ENCODE measurements at regions of chr10 and their contacts with region 1.

Region 1: GRCh38 chr10:6088721-6089390 is at the start of gene RBM17:
- DNase-seq: peak; percentile 96 to 99 (median 97)
- ATAC-seq: peak; percentile 88
- H3K4me3 ChIP-seq: peak within 1 kb of the TSS; percentile 82 to 83
- H3K4me3 Mint-ChIP-seq: peak within 1 kb of the TSS; percentile 96
- H3K27ac ChIP-seq: peak within 1 kb of the TSS; percentile 24 to 54
- H3K27ac Mint-ChIP-seq: peak within 1 kb of the TSS; percentile 86
- H3K4me1 ChIP-seq: peaks cover 47% of the 10 kb centered on the region
- H3K4me1 Mint-ChIP-seq: peaks cover 52% of the 10 kb centered on the region
- H3K27me3 ChIP-seq: no peaks in the 10 kb centered on the region
- H3K27me3 Mint-ChIP-seq: peaks cover 1% of the 10 kb centered on the region
- CTCF ChIP-seq: peak; percentile 100
- total RNA-seq, gene RBM17: 151 to 160 TPM

Region 2: GRCh38 chr10:5813287-5814109 is 275.4 kb before region 1 on chr10 and contains the start of gene GDI2:
- CTCF ChIA-PET with region 1: interaction called, 3 read pairs
- POLR2A ChIA-PET with region 1: no interaction called
- intact Hi-C with region 1: loop called (anchors 2 to 5 kb)
- DNase-seq: peak; percentile 91 to 98 (median 96)
- ATAC-seq: peak; percentile 93
- H3K4me3 ChIP-seq: peak within 1 kb of the TSS; percentile 68 to 83
- H3K4me3 Mint-ChIP-seq: peak within 1 kb of the TSS; percentile 86
- H3K27ac ChIP-seq: peak within 1 kb of the TSS; percentile 87 to 93
- H3K27ac Mint-ChIP-seq: peak within 1 kb of the TSS; percentile 87
- H3K4me1 ChIP-seq: peaks cover 48% of the 10 kb centered on the region
- H3K4me1 Mint-ChIP-seq: peaks cover 56% of the 10 kb centered on the region
- H3K27me3 ChIP-seq: no peaks in the 10 kb centered on the region
- H3K27me3 Mint-ChIP-seq: no peaks in the 10 kb centered on the region
- CTCF ChIP-seq: no peak
- total RNA-seq, gene GDI2: 62.1 to 70.5 TPM

Region 3: DNA sequence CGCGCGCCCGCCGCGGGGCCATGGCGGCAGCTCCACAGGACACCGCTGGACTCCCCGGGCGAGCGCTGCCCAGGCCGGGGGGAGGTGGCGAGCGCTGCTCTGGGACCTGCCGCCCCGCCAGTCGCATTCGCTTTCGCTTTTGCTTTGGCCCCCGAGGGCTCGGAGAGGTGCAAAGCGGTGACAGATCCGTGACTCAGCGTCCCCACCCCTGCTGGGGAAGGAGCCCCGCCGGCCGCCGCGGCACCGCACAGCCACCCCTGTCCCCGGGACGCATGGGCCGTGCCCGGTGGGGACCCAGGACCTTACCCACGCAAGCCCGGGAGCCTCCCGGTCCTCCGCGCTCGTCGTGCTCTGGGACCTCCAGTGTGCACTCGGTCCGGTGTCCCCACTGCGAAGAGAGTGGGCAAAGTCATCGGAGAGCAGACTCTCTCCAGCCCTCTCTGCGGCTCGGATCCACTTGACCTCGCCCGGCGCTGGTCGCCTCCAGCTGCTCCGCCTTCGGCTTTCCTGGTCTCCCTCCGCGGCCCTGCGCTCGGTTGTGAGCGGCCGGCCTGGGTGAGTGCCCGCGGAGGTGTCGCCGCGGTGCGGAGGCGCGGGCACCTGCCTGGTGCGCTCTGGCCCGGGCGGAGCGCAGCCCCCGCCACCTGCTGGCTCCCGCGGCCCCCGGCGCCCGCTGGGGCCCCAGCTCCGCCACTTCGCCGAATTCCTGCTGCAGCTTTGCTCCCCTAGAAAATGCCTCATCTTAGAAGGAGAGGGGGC is 111.2 kb before region 1 on chr10 and contains the start of gene IL15RA:
- CTCF ChIA-PET with region 1: interaction called, 3 read pairs
- POLR2A ChIA-PET with region 1: interaction called, 4 read pairs
- intact Hi-C with region 1: loop called in 1 of 2 experiments (anchors 1 kb)
- DNase-seq: peak; percentile 54 to 91 (median 84)
- ATAC-seq: peak; percentile 78
- H3K4me3 ChIP-seq: peak within 1 kb of the TSS; percentile 92 to 95
- H3K4me3 Mint-ChIP-seq: peak within 1 kb of the TSS; percentile 97
- H3K27ac ChIP-seq: peak within 1 kb of the TSS; percentile 77 to 82
- H3K27ac Mint-ChIP-seq: peak within 1 kb of the TSS; percentile 96
- H3K4me1 ChIP-seq: peaks cover 12% of the 10 kb centered on the region
- H3K4me1 Mint-ChIP-seq: peaks cover 24% of the 10 kb centered on the region
- H3K27me3 ChIP-seq: no peaks in the 10 kb centered on the region
- H3K27me3 Mint-ChIP-seq: no peaks in the 10 kb centered on the region
- CTCF ChIP-seq: no peak
- total RNA-seq, gene IL15RA: 4.8 to 5.4 TPM

Region 4: DNA sequence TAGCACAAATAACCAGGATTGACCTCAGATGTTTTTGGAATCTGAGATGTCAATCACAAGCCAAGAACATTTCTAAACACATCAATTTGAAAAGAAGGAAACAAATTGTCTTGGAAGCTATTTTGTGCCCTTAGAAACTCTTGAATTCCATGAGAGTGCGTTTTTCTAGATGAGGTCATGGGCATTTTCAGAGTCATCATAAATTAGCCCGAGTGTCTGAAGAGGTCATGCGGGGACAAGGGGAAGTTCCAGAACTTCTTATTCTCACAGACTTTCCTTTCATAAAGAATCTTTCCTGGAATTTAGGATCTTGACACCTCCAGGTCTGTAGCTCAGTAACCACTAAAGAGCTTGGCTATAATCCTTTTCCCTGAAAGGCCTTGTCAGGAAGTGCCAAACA is 54.9 kb before region 1 on chr10:
- CTCF ChIA-PET with region 1: interaction called, 11 read pairs
- POLR2A ChIA-PET with region 1: interaction called, 4 read pairs
- intact Hi-C with region 1: no loop called
- DNase-seq: no peak
- ATAC-seq: no peak
- H3K4me3 ChIP-seq: no peak overlapping the region
- H3K4me3 Mint-ChIP-seq: no peak overlapping the region
- H3K27ac ChIP-seq: no peak overlapping the region
- H3K27ac Mint-ChIP-seq: no peak overlapping the region
- H3K4me1 ChIP-seq: peaks cover 26% of the 10 kb centered on the region
- H3K4me1 Mint-ChIP-seq: peaks cover 27% of the 10 kb centered on the region
- H3K27me3 ChIP-seq: no peaks in the 10 kb centered on the region
- H3K27me3 Mint-ChIP-seq: no peaks in the 10 kb centered on the region
- CTCF ChIP-seq: no peak

Region 5: GRCh38 chr10:6050801-6051445 is 37.9 kb before region 1 on chr10:
- CTCF ChIA-PET with region 1: interaction called, 46 read pairs
- POLR2A ChIA-PET with region 1: interaction called, 15 read pairs
- intact Hi-C with region 1: loop called (anchors 1 to 2 kb)
- DNase-seq: peak; percentile 68 to 99 (median 86)
- ATAC-seq: peak; percentile 79
- H3K4me3 ChIP-seq: peak overlapping the region; percentile 57 to 69
- H3K4me3 Mint-ChIP-seq: peak overlapping the region; percentile 88
- H3K27ac ChIP-seq: peak overlapping the region; percentile 52 to 79
- H3K27ac Mint-ChIP-seq: peak overlapping the region; percentile 96
- H3K4me1 ChIP-seq: peaks cover 44% of the 10 kb centered on the region
- H3K4me1 Mint-ChIP-seq: peaks cover 75% of the 10 kb centered on the region
- H3K27me3 ChIP-seq: no peaks in the 10 kb centered on the region
- H3K27me3 Mint-ChIP-seq: no peaks in the 10 kb centered on the region
- CTCF ChIP-seq: peak; percentile 18

Region 6: DNA sequence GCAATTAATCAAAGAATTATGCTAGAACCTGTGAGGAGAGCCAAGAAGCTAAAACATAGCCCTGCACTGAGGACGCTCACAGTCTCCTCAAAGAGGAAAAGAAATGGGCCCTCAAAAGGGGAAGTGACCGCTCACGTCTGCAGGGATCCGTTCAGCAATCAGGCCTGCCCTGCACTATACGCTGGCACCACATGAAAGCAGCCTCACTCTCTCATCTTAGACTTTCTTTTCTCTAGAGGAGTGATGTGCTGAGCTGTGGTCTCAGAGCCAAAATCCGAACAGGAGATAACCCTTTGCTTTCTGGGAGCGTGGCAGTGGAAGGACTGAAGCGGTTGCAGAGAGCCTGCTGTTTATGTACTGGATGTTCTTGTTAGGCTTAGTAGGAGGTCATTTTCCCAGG is 20.4 kb before region 1 on chr10:
- CTCF ChIA-PET with region 1: interaction called, 64 read pairs
- POLR2A ChIA-PET with region 1: interaction called, 9 read pairs
- intact Hi-C with region 1: loop called (anchors 2 kb)
- DNase-seq: peak in 5 of 9 experiments; percentile 30 to 72 (median 50)
- ATAC-seq: peak; percentile 81
- H3K4me3 ChIP-seq: peak overlapping the region in 1 of 2 experiments; percentile 23
- H3K4me3 Mint-ChIP-seq: peak overlapping the region; percentile 80
- H3K27ac ChIP-seq: no peak overlapping the region
- H3K27ac Mint-ChIP-seq: peak overlapping the region; percentile 81
- H3K4me1 ChIP-seq: peaks cover 49% of the 10 kb centered on the region
- H3K4me1 Mint-ChIP-seq: peaks cover 73% of the 10 kb centered on the region
- H3K27me3 ChIP-seq: no peaks in the 10 kb centered on the region
- H3K27me3 Mint-ChIP-seq: no peaks in the 10 kb centered on the region
- CTCF ChIP-seq: no peak

Region 7: GRCh38 chr10:6202684-6203330 is 114.0 kb after region 1 on chr10 and contains the start of gene PFKFB3:
- CTCF ChIA-PET with region 1: interaction called, 9 read pairs
- POLR2A ChIA-PET with region 1: no interaction called
- intact Hi-C with region 1: loop called (anchors 1 to 5 kb)
- DNase-seq: peak; percentile 76 to 96 (median 91)
- ATAC-seq: peak; percentile 62
- H3K4me3 ChIP-seq: peak within 1 kb of the TSS; percentile 54 to 61
- H3K4me3 Mint-ChIP-seq: peak within 1 kb of the TSS; percentile 99
- H3K27ac ChIP-seq: peak within 1 kb of the TSS; percentile 29 to 68
- H3K27ac Mint-ChIP-seq: peak within 1 kb of the TSS; percentile 94
- H3K4me1 ChIP-seq: peaks cover 18% of the 10 kb centered on the region
- H3K4me1 Mint-ChIP-seq: peaks cover 26% of the 10 kb centered on the region
- H3K27me3 ChIP-seq: no peaks in the 10 kb centered on the region
- H3K27me3 Mint-ChIP-seq: no peaks in the 10 kb centered on the region
- CTCF ChIP-seq: peak; percentile 94
- total RNA-seq, gene PFKFB3: 221 to 233 TPM

Measured in CD8-positive, alpha-beta T cell (primary cell).